BJ (cell line): ENCODE measurements at regions of chr1 and their contacts with region 1.

Region 1: DNA sequence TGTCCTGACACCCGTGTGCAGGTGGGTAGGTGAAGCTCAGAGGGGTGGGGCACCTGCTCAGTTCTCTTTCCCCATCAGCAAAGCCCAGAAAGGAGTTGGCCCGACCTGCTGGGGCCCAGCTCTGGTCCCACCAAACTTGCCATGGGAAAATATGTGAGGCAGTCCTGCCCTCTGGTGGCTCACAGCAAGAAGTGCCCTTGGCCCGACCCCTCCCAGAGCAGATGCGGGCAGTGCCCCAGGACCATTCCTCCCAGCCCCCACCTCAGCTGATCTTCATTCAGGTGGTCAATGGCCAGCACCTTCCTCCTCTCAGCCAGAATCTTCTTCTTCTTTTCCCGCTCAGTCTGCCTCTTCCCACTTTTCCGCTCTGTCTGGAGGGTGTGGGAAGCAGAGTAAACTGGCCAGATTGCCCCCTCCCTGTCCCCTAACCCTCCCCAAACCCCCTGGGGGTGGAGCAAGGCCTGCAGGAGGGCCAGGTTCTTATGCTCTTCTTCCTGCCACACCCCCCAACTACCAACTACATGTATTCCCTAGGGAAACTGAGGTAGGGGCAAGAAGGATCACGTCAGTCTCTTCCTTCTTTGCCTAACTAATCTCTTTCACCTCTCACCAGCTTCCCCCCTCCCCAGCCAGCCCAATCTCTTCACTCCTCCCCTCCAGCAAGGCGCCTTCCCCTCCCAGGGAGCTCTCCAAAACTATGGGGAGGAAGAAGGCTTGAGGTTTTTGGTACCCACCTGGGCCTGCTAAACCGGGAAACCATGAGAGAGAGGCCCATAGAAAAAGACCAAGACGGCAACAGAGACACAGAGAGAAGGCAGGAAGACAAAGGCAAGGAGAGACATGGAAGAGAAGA is 15.6 kb downstream of the TNNT2 start:
- DNase-seq: no peak
- H3K4me3 ChIP-seq: no peak overlapping the region
- H3K27me3 ChIP-seq: peaks cover 9% of the 10 kb centered on the region
- CTCF ChIP-seq: peak; percentile 82

Region 2: GRCh38 chr1:200802865-200803512 is 558.9 kb before region 1 on chr1:
- CTCF ChIA-PET with region 1: no interaction called
- POLR2A ChIA-PET with region 1: no interaction called
- DNase-seq: no peak
- H3K4me3 ChIP-seq: no peak overlapping the region
- H3K27me3 ChIP-seq: no peaks in the 10 kb centered on the region
- CTCF ChIP-seq: peak; percentile 95

Region 3: DNA sequence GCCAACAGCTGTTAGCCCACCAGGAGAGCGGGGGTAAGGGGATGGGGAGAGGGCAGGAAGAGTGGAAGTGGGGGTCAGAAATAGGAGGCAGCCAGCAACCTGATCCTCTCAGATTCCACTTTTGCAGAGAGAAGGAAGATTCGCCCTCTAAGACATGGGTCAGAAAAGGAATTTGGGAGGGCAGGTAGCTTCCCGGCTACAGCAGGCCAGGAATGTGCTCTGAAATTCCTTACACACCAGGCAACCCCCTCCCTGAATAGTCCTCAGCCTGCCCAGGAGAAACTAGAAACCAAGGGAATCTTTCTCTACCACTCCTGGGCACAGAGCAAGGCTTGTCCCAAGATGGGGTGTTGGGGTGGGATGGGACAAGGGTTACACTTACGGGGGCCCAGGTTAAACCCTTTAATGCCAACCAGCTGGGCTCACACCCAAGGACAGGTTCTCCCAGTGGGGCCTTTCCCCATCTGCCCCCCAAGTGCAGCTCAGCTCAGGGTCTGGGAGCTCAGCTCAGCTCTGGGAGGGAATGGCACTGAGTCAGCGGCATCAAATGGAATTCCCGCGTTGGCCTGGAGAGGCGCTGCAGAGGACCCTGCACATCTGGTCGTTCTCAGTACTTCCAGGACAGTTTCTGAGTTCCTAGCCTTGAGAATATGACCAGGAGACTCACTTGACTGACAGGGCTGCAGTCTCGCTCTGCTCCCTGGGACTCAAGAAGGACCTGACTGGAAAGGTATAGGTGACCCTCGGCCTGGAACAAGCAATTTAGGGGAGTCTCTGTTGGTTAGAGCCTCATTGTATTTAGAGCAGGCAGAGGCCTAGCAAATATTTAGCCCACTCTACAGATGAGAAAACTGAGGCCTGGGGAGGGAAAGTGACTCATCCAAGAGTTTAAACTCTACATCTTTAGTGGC is 14.8 kb after region 1 on chr1:
- CTCF ChIA-PET with region 1: interaction called, 17 read pairs
- POLR2A ChIA-PET with region 1: no interaction called
- DNase-seq: peak; percentile 2
- H3K4me3 ChIP-seq: no peak overlapping the region
- H3K27me3 ChIP-seq: peaks cover 27% of the 10 kb centered on the region
- CTCF ChIP-seq: peak; percentile 61